B cell (primary cell): ENCODE measurements at regions of chr4 and their contacts with region 1.

Region 1: GRCh38 chr4:139083956-139084803 is 68.6 kb downstream of the NOCT start:
- DNase-seq: peak; percentile 92
- ATAC-seq: peak; percentile 62
- H3K4me3 ChIP-seq: peak overlapping the region; percentile 79 to 98 (median 97)
- H3K4me3 Mint-ChIP-seq: peak overlapping the region; percentile 87
- H3K27ac ChIP-seq: peak overlapping the region; percentile 89 to 93
- H3K27ac Mint-ChIP-seq: peak overlapping the region; percentile 94
- H3K4me1 ChIP-seq: peaks cover 14 to 23% of the 10 kb centered on the region in 2 donors
- H3K4me1 Mint-ChIP-seq: peaks cover 36% of the 10 kb centered on the region
- H3K27me3 ChIP-seq: no peaks in the 10 kb centered on the region
- H3K27me3 Mint-ChIP-seq: no peaks in the 10 kb centered on the region
- CTCF ChIP-seq: peak; percentile 42

Region 2: GRCh38 chr4:139015269-139015947 is 68.8 kb before region 1 on chr4 and contains the start of gene NOCT:
- CTCF ChIA-PET with region 1: no interaction called
- POLR2A ChIA-PET with region 1: interaction called, 4 read pairs
- intact Hi-C with region 1: loop called (anchors 1 kb)
- DNase-seq: peak; percentile 97
- ATAC-seq: peak; percentile 92
- H3K4me3 ChIP-seq: peak within 1 kb of the TSS; percentile 56 to 86 (median 78)
- H3K4me3 Mint-ChIP-seq: peak within 1 kb of the TSS; percentile 92
- H3K27ac ChIP-seq: peak within 1 kb of the TSS; percentile 88 to 98
- H3K27ac Mint-ChIP-seq: peak within 1 kb of the TSS; percentile 98
- H3K4me1 ChIP-seq: peaks cover 14 to 18% of the 10 kb centered on the region in 2 donors
- H3K4me1 Mint-ChIP-seq: peaks cover 28% of the 10 kb centered on the region
- H3K27me3 ChIP-seq: no peaks in the 10 kb centered on the region
- H3K27me3 Mint-ChIP-seq: no peaks in the 10 kb centered on the region
- CTCF ChIP-seq: no peak
- total RNA-seq, gene NOCT: 2.6 and 3.0 TPM in 2 replicates

Region 3: GRCh38 chr4:139295206-139295941 is 211.2 kb after region 1 on chr4:
- CTCF ChIA-PET with region 1: interaction called, 31 read pairs
- POLR2A ChIA-PET with region 1: interaction called, 27 read pairs
- intact Hi-C with region 1: loop called (anchors 1 kb)
- DNase-seq: peak; percentile 96
- ATAC-seq: peak; percentile 98
- H3K4me3 ChIP-seq: peak overlapping the region; percentile 78 to 96 (median 91)
- H3K4me3 Mint-ChIP-seq: peak overlapping the region; percentile 97
- H3K27ac ChIP-seq: peak overlapping the region; percentile 89 to 92
- H3K27ac Mint-ChIP-seq: peak overlapping the region; percentile 96
- H3K4me1 ChIP-seq: peaks cover 16 to 23% of the 10 kb centered on the region in 2 donors
- H3K4me1 Mint-ChIP-seq: peaks cover 26% of the 10 kb centered on the region
- H3K27me3 ChIP-seq: no peaks in the 10 kb centered on the region
- H3K27me3 Mint-ChIP-seq: no peaks in the 10 kb centered on the region
- CTCF ChIP-seq: peak; percentile 93

Region 4: GRCh38 chr4:139312552-139313332 is 228.6 kb after region 1 on chr4:
- CTCF ChIA-PET with region 1: no interaction called
- POLR2A ChIA-PET with region 1: interaction called, 10 read pairs
- intact Hi-C with region 1: no loop called
- DNase-seq: peak; percentile 62
- ATAC-seq: peak; percentile 53
- H3K4me3 ChIP-seq: peak overlapping the region in 1 of 5 experiments; percentile 48
- H3K4me3 Mint-ChIP-seq: peak overlapping the region; percentile 87
- H3K27ac ChIP-seq: peak overlapping the region; percentile 43 to 80
- H3K27ac Mint-ChIP-seq: peak overlapping the region; percentile 93
- H3K4me1 ChIP-seq: peaks cover 44 to 59% of the 10 kb centered on the region in 2 donors
- H3K4me1 Mint-ChIP-seq: peaks cover 70% of the 10 kb centered on the region
- H3K27me3 ChIP-seq: no peaks in the 10 kb centered on the region
- H3K27me3 Mint-ChIP-seq: no peaks in the 10 kb centered on the region
- CTCF ChIP-seq: no peak

Region 5: DNA sequence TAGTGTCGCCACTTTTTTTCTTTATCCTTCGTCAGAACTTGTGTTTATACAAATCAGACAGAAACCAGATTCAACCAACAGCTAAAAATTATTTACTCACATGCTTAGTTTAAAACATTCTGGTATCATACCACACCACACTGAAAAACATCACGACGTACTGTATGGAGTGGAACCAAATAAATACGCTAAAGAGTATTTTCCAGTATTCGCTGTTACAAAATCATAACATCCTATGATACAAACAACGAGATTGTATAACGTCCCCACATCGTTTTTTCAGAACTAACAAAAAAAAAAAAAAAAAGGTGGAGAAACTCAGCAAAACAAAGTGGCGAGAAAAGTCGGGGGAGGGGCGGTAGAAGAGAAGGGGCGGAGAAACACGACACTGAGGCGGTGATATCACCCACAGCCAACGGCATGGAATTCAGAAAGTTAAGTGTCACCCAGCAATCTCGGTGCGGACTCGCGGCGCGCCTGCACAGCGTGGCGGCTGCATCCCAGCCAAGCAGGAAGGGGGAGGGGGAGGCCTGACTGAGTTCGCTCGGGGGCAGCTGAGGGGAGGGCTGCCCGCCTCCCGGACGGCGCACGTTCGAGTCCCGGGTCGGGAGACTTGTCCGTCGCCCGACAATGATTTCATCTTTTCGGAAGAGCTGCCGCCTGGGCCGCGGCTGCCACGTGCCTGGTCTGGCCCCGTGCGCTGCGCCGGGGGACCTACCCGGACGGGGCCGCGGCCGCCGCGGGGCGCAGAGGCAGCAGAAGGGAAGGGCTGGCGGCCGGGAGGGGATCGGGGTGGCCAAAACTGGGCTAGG is 470.9 kb after region 1 on chr4:
- CTCF ChIA-PET with region 1: no interaction called
- POLR2A ChIA-PET with region 1: no interaction called
- intact Hi-C with region 1: loop called (anchors 2 kb)
- DNase-seq: peak; percentile 91
- ATAC-seq: peak; percentile 60
- H3K4me3 ChIP-seq: peak overlapping the region; percentile 73 to 96 (median 89)
- H3K4me3 Mint-ChIP-seq: peak overlapping the region; percentile 100
- H3K27ac ChIP-seq: peak overlapping the region; percentile 93 to 98
- H3K27ac Mint-ChIP-seq: peak overlapping the region; percentile 100
- H3K4me1 ChIP-seq: peaks cover 29 to 31% of the 10 kb centered on the region in 2 donors
- H3K4me1 Mint-ChIP-seq: peaks cover 63% of the 10 kb centered on the region
- H3K27me3 ChIP-seq: no peaks in the 10 kb centered on the region
- H3K27me3 Mint-ChIP-seq: no peaks in the 10 kb centered on the region
- CTCF ChIP-seq: no peak